AG04450 (cell line): ENCODE measurements at regions of chr3 and their contacts with region 1.

Region 1: GRCh38 chr3:53236112-53236841 is 19.5 kb downstream of the TKT start:
- DNase-seq: peak; percentile 72
- H3K4me3 ChIP-seq: no peak overlapping the region
- H3K27ac ChIP-seq: peak overlapping the region; percentile 94
- H3K27me3 ChIP-seq: no peaks in the 10 kb centered on the region
- CTCF ChIP-seq: no peak

Region 2: GRCh38 chr3:53219895-53220483 is 16.3 kb before region 1 on chr3:
- CTCF ChIA-PET with region 1: interaction called, 28 read pairs
- POLR2A ChIA-PET with region 1: no interaction called
- DNase-seq: peak; percentile 41
- H3K4me3 ChIP-seq: no peak overlapping the region
- H3K27ac ChIP-seq: no peak overlapping the region
- H3K27me3 ChIP-seq: no peaks in the 10 kb centered on the region
- CTCF ChIP-seq: peak; percentile 97